ENCODE measurements at regions of chr19 and their contacts with region 1.

Region 1: DNA sequence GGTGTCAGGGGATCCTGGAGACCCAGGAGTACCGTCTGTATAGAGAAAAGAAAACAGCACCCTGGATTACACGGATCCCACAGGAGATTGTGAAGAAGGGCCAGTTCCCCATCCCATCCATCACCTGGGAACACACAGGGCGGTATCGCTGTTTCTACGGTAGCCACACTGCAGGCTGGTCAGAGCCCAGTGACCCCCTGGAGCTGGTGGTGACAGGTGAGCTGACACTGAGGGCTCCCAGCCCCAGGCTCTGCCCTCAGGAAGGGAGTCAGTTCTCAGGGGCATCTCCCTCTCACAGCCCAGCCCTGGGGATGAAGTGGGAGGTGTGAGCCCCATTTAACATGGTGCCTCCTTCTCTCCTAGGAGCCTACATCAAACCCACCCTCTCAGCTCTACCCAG is 1.3 kb downstream of the LILRA1 start:
- DNase-seq: no peak
- H3K4me3 ChIP-seq: peak overlapping the region; percentile 82 to 93 (median 88)
- H3K4me3 Mint-ChIP-seq: peak overlapping the region; percentile 98 to 100
- H3K27ac ChIP-seq: peak overlapping the region; percentile 85 to 88
- H3K27ac Mint-ChIP-seq: peak overlapping the region in 6 of 7 donors; percentile 69 to 98 (median 96)
- H3K4me1 ChIP-seq: peaks cover 33 to 52% of the 10 kb centered on the region in 2 donors
- H3K4me1 Mint-ChIP-seq: peaks cover 66% of the 10 kb centered on the region
- H3K27me3 ChIP-seq: no peaks in the 10 kb centered on the region
- H3K27me3 Mint-ChIP-seq: peaks cover 0 to 3% (median 2%) of the 10 kb centered on the region in 3 donors
- CTCF ChIP-seq: no peak

Region 2: GRCh38 chr19:54630782-54631181 is 36.0 kb after region 1 on chr19:
- intact Hi-C with region 1: loop called (anchors 5 kb)
- DNase-seq: peak in 2 of 3 donors; percentile 27 to 47
- H3K4me3 ChIP-seq: peak overlapping the region; percentile 84 to 97 (median 94)
- H3K4me3 Mint-ChIP-seq: peak overlapping the region; percentile 99 to 100
- H3K27ac ChIP-seq: peak overlapping the region; percentile 70 to 84
- H3K27ac Mint-ChIP-seq: peak overlapping the region; percentile 88 to 96 (median 91)
- H3K4me1 ChIP-seq: peaks cover 39 to 48% of the 10 kb centered on the region in 2 donors
- H3K4me1 Mint-ChIP-seq: peaks cover 58% of the 10 kb centered on the region
- H3K27me3 ChIP-seq: no peaks in the 10 kb centered on the region
- H3K27me3 Mint-ChIP-seq: peaks cover 2 to 9% (median 3%) of the 10 kb centered on the region in 3 donors
- CTCF ChIP-seq: no peak

Measured in CD14-positive monocyte (primary cell).